Thyroid gland (tissue), 4 donors: ENCODE measurements at regions of chr7 and their contacts with region 1.

Region 1: GRCh38 chr7:30564243-30564892 is 30.3 kb upstream of the GARS1 start:
- DNase-seq: peak; percentile 81 to 87
- H3K4me3 ChIP-seq: no peak overlapping the region
- H3K27ac ChIP-seq: no peak overlapping the region
- H3K4me1 ChIP-seq: peaks cover 10 to 22% of the 10 kb centered on the region in 2 donors
- H3K27me3 ChIP-seq: no peaks in the 10 kb centered on the region
- CTCF ChIP-seq: peak; percentile 65 to 95 (median 80)
- POLR2A ChIP-seq: no peak

Region 2: DNA sequence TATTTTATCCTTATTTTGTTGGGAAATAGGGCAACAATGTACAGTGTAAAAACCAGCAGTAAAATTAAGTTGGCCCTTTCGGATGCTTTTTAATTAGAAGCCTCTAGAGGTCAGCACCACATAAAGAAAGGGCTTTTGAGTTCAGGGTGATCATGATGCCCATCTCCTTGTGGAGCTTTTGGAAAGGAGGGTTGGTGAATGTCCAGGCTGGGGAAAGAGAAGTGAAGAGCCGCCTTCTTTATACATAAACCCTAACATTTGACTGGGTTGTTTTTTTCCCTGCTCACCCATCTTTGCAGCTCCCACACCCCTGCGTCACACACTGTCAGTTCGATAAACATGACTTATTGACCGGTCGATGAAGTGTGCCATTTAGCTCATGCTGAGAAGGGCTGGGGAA is 399.8 kb before region 1 on chr7:
- intact Hi-C with region 1: loop called (anchors 10 kb)
- DNase-seq: peak; percentile 17 to 25
- H3K4me3 ChIP-seq: no peak overlapping the region
- H3K27ac ChIP-seq: peak overlapping the region in 2 of 3 donors; percentile 65 to 75
- H3K4me1 ChIP-seq: peaks cover 25 to 38% of the 10 kb centered on the region in 2 donors
- H3K27me3 ChIP-seq: no peaks in the 10 kb centered on the region
- CTCF ChIP-seq: peak in 5 of 6 experiments; percentile 16 to 85 (median 72)
- POLR2A ChIP-seq: no peak

Region 3: DNA sequence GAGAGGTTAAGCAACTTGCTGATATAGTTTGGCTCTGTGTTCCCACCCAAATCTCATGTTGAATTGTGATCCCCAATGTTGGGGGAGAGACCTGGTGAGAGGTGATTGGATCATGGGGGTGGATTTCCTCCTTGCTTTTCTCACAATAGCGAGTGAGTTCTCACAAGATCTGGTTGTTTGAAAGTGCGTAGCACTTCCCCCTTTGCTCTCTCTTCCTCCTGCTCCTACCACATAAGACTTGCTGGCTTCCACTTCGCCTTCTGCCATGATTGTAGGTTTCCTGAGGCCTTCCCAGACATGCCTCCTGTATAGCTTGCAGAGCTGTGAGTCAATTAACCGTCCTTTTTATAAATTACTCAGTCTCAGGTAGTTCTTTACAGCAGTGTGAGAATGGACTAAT is 293.4 kb before region 1 on chr7:
- intact Hi-C with region 1: loop called (anchors 5 kb)
- DNase-seq: no peak
- H3K4me3 ChIP-seq: no peak overlapping the region
- H3K27ac ChIP-seq: no peak overlapping the region
- H3K4me1 ChIP-seq: peaks cover 10 to 13% of the 10 kb centered on the region in 2 donors
- H3K27me3 ChIP-seq: no peaks in the 10 kb centered on the region
- CTCF ChIP-seq: no peak
- POLR2A ChIP-seq: no peak

Region 4: GRCh38 chr7:30504347-30505173 is 59.8 kb before region 1 on chr7 and contains the start of gene GGCT:
- intact Hi-C with region 1: loop called (anchors 10 kb)
- DNase-seq: peak; percentile 100
- H3K4me3 ChIP-seq: peak within 1 kb of the TSS; percentile 72 to 91 (median 89)
- H3K27ac ChIP-seq: peak within 1 kb of the TSS; percentile 84 to 89 (median 89)
- H3K4me1 ChIP-seq: peaks cover 18 to 19% of the 10 kb centered on the region in 2 donors
- H3K27me3 ChIP-seq: no peaks in the 10 kb centered on the region
- CTCF ChIP-seq: no peak
- POLR2A ChIP-seq: peak in 1 of 2 donors; percentile 81
- total RNA-seq, gene GGCT: 24.1 to 47.0 (median 30.1) TPM

Region 5: GRCh38 chr7:30708976-30709375 is 144.6 kb after region 1 on chr7:
- intact Hi-C with region 1: no loop called
- DNase-seq: peak in 1 of 2 donors; percentile 12
- H3K4me3 ChIP-seq: no peak overlapping the region
- H3K27ac ChIP-seq: no peak overlapping the region
- H3K4me1 ChIP-seq: peaks cover 0 to 11% of the 10 kb centered on the region in 2 donors
- H3K27me3 ChIP-seq: no peaks in the 10 kb centered on the region
- CTCF ChIP-seq: no peak
- POLR2A ChIP-seq: no peak

Region 6: DNA sequence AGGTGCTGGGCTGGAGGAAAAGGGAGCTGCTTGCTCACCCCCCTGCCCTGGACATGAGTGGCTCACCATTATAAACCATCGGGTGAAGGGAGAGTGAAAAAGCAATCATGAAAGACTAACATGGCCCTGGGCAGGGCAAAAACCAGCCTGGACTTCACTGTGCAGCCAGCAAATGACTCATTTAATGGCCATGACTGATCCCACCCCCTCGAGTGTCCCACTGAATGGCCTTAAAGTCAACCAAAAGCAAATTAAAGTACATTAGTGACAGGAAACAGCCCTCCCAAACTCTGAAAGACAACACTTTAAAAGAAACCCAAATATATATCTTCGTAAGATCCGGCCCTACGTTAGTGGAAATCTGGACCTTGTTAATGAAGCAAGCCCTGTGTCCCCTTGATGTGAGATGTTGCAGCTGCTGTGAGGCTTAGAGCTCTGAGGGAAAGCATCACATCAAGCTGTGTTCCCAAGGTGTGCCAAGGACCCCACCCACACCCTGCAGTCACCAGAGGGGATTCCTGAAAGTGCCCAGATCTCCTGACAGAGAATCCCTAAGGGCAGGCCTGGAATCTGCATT is 518.9 kb after region 1 on chr7:
- intact Hi-C with region 1: no loop called
- DNase-seq: no peak
- H3K4me3 ChIP-seq: no peak overlapping the region
- H3K27ac ChIP-seq: no peak overlapping the region
- H3K4me1 ChIP-seq: peaks cover 10 to 12% of the 10 kb centered on the region in 2 donors
- H3K27me3 ChIP-seq: no peaks in the 10 kb centered on the region
- CTCF ChIP-seq: no peak
- POLR2A ChIP-seq: no peak